Calu3 (cell line): ENCODE measurements at regions of chr6 and their contacts with region 1.

Region 1: DNA sequence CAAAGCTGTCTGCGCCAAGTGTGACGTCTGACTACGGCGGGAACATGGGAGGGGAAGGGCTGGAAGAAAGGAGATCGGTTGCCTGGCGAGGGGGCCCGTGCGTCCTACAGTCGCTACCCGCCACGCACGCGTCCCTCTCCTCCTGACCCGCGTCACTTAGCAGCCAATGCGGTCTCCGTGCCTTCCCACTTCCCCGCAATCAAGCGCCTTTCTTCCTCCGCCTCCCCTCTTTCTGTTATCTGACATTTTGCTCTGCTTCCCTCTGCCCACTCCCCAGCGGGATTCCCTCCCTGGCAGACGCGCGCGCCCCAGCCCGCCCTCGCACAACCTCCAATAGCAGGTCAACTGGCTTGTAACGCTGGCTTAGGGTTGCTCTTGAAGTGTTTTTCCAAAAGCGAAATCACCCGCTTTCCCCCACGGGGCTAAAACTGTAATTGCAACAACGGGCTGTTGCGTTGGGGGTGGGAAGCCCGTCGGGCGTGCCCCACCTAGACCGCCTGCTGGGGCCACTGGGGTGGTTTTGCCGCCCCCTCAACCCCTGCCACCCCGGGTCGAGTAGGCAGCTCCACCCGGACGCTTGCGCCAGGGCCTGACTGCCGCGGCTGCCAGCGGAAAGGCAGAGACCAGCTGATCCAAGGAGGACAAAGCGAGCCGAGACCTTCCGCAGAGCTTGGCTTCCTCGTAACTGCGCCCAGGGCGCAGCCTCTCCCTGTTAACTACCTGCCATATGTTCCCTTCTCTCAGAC is 6.2 kb upstream of the SOX4 start:
- DNase-seq: peak; percentile 79
- H3K4me3 Mint-ChIP-seq: peak overlapping the region; percentile 93
- H3K27ac Mint-ChIP-seq: peak overlapping the region; percentile 89
- H3K4me1 Mint-ChIP-seq: no peaks in the 10 kb centered on the region
- H3K27me3 Mint-ChIP-seq: no peaks in the 10 kb centered on the region
- CTCF ChIP-seq: peak; percentile 69

Region 2: GRCh38 chr6:20444786-20445271 is 1142.5 kb before region 1 on chr6:
- CTCF ChIA-PET with region 1: interaction called, 10 read pairs
- intact Hi-C with region 1: no loop called
- DNase-seq: peak; percentile 23
- H3K4me3 Mint-ChIP-seq: no peak overlapping the region
- H3K27ac Mint-ChIP-seq: peak overlapping the region; percentile 6
- H3K4me1 Mint-ChIP-seq: peaks cover 29% of the 10 kb centered on the region
- H3K27me3 Mint-ChIP-seq: no peaks in the 10 kb centered on the region
- CTCF ChIP-seq: no peak

Region 3: GRCh38 chr6:21046276-21046675 is 541.1 kb before region 1 on chr6:
- CTCF ChIA-PET with region 1: interaction called, 10 read pairs
- intact Hi-C with region 1: no loop called
- DNase-seq: no peak
- H3K4me3 Mint-ChIP-seq: no peak overlapping the region
- H3K27ac Mint-ChIP-seq: peak overlapping the region; percentile 72
- H3K4me1 Mint-ChIP-seq: peaks cover 43% of the 10 kb centered on the region
- H3K27me3 Mint-ChIP-seq: no peaks in the 10 kb centered on the region
- CTCF ChIP-seq: no peak

Region 4: DNA sequence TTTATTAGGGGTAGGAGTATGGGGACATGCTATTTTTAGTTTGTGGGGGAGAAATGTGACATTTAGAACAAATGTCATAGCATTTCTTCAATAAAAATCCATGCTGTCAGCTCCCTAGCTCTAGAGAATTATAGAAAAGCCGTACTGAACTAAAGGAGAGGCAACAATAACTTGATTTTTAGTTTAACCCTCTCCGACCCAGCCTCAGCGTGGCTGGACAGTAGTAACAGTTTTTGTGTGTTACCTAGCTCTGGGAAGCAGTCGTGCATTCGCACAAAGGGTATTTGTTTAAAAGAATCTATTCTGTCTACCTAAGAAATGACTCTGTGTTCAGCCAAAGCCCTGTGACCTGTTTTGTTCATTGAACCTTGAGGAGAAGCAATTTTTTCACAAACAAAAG is 436.2 kb before region 1 on chr6:
- CTCF ChIA-PET with region 1: no interaction called
- intact Hi-C with region 1: loop called (anchors 2 kb)
- DNase-seq: no peak
- H3K4me3 Mint-ChIP-seq: no peak overlapping the region
- H3K27ac Mint-ChIP-seq: no peak overlapping the region
- H3K4me1 Mint-ChIP-seq: peaks cover 21% of the 10 kb centered on the region
- H3K27me3 Mint-ChIP-seq: no peaks in the 10 kb centered on the region
- CTCF ChIP-seq: no peak

Region 5: GRCh38 chr6:21220271-21220987 is 366.9 kb before region 1 on chr6:
- CTCF ChIA-PET with region 1: interaction called, 6 read pairs
- intact Hi-C with region 1: loop called (anchors 1 kb)
- DNase-seq: peak; percentile 61
- H3K4me3 Mint-ChIP-seq: peak overlapping the region; percentile 15
- H3K27ac Mint-ChIP-seq: peak overlapping the region; percentile 53
- H3K4me1 Mint-ChIP-seq: peaks cover 24% of the 10 kb centered on the region
- H3K27me3 Mint-ChIP-seq: no peaks in the 10 kb centered on the region
- CTCF ChIP-seq: no peak